Activated CD8-positive, alpha-beta T cell treated with anti-CD3 and anti-CD28 coated beads, Interleukin-2, amount 10 ng/mL, durations not matched to agents 7 days and 5 days (primary cell): ENCODE measurements at regions of chr21 and their contacts with region 1.

Region 1: DNA sequence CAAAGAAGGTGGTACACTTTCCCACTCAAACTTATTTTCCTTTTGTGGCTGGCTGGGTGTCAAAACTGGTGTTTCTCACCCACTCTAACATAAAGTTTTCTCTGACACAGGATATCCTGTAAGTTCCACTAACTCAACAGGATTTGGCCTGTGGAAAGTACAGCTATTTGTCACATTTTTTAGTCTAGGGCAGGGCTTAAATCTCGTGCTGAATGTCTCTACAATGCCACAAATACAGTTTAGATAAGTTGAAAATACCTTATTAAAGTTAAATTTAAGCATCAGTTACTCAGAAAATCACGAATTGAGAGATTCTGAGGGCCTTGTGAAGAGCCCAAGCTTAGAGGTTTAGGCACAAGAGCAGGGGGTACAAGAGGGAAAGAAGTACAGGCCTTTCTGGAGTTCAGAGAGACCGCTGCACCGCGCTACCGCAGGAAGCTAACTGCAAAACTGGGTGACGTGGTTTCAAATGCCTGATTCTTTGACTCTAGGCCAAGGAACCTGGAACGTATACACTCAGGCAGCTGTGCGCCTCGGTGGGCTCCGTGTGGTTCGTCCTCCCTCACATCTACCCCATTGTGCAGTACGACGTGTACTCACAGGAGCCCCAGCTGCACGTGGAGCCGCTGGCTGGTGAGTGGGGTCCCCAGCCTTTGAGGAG is 23.4 kb upstream of the PWP2 start:
- DNase-seq: peak; percentile 86
- ATAC-seq: peak; percentile 79
- H3K4me3 Mint-ChIP-seq: peak overlapping the region; percentile 75
- H3K27ac Mint-ChIP-seq: peak overlapping the region; percentile 95
- H3K4me1 Mint-ChIP-seq: peaks cover 96% of the 10 kb centered on the region
- H3K27me3 Mint-ChIP-seq: no peaks in the 10 kb centered on the region

Region 2: DNA sequence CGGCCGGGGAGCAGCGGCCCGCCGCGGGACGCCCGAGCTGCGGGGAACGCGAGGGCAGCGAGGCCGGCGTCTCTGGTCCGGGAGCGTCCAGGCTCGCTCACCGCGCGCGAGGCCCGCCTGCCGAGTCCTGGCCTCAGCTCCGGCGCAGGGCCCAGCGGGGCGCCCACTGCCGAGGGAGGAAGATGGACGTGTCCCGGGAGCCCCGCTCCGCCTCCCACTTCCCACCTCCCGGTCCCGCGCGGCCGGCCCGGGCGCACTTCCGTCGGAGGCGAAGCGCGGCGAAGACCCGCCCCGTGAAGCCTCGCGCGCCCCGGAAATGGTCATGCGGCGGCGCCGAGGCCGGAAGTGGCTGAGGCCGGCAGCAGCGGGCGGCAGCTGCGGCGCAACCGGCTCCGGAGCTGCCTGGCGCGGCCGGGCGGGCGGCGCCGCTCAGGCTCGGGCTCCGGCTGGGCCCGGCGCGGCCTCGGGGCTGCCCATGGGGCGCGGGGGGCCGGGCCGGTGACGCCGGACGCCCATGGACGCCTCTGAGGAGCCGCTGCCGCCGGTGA is 71.7 kb before region 1 on chr21 and contains the start of gene TRAPPC10:
- CTCF ChIA-PET with region 1: interaction called, 22 read pairs
- POLR2A ChIA-PET with region 1: interaction called, 37 read pairs
- DNase-seq: peak; percentile 85
- ATAC-seq: peak; percentile 67
- H3K4me3 Mint-ChIP-seq: peak within 1 kb of the TSS; percentile 90
- H3K27ac Mint-ChIP-seq: peak within 1 kb of the TSS; percentile 93
- H3K4me1 Mint-ChIP-seq: peaks cover 47% of the 10 kb centered on the region
- H3K27me3 Mint-ChIP-seq: no peaks in the 10 kb centered on the region
- total RNA-seq, gene TRAPPC10: 72.2 to 82.7 TPM

Region 3: GRCh38 chr21:44065428-44065827 is 18.3 kb before region 1 on chr21:
- CTCF ChIA-PET with region 1: interaction called, 5 read pairs
- POLR2A ChIA-PET with region 1: interaction called, 37 read pairs
- DNase-seq: peak; percentile 87
- ATAC-seq: peak; percentile 100
- H3K4me3 Mint-ChIP-seq: peak overlapping the region; percentile 70
- H3K27ac Mint-ChIP-seq: peak overlapping the region; percentile 99
- H3K4me1 Mint-ChIP-seq: peaks cover 47% of the 10 kb centered on the region
- H3K27me3 Mint-ChIP-seq: no peaks in the 10 kb centered on the region

Region 4: DNA sequence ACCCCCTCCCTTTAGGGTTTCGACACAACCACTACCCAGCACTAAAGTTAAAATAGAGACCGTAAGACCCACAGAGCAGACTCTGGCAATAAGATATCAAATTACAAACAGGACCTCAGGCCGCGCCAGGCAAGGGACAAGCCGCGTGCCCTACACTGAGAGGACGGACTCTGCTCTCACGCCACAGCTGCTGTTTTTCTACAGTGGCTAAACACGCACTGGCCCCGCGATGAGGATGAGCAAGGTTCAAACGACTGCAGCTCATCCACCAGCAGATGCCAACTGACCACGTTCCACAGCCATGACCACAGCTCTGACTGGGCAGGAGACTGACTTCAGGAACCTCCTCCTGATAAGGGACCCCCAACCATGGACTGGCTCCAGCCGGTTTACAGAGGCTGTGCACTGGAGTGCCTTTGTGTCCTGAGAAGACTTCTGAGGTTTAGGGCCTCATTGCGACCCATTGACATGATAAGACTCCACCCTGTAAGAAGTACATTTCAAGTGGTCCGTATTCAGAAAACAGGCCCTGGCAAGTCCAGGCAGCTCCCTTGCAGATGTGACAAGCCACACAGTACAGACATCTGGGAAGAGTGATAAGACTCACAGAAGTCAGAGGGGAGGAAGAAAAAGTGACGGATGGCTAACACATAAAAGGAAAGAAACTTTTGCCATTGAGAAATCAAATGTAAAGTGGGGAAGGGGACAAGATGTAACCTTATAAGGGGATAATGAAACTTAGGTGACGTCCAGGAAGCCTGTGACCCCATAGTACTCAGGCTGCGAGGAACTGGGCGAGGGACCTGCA is 510.0 kb after region 1 on chr21:
- CTCF ChIA-PET with region 1: no interaction called
- POLR2A ChIA-PET with region 1: no interaction called
- DNase-seq: no peak
- ATAC-seq: no peak
- H3K4me3 Mint-ChIP-seq: no peak overlapping the region
- H3K27ac Mint-ChIP-seq: no peak overlapping the region
- H3K4me1 Mint-ChIP-seq: peaks cover 2% of the 10 kb centered on the region
- H3K27me3 Mint-ChIP-seq: no peaks in the 10 kb centered on the region